ENCODE measurements at regions of chr17 and their contacts with region 1.

Region 1: DNA sequence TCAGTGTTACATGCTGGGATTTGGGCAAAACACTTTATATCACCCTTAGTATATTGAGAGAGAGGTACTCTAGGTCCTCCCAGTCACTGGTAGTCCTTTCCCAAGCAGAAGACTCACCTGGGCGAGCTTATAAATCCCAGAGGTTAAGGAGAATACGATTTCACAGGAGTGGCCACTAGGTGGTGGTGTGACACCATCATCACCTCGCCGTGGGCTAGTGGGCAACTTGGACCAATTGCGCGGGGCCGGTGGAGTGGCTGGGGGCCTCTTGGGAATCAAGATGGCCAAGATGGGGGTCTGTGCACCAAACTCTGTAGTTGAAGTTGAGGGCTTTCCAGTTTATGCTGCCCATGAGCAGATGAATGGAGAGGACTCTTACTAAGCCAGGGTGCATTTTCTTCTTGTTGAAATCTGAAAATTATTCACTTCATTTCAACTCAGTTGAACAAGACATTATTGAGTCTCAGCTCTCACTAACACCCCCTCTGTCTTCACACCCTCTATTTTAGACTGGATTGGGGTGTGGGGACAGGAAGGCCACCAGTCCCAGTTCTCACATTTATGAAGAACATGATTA is 38.2 kb upstream of the PIRT start:
- DNase-seq: peak; percentile 19
- H3K4me3 ChIP-seq: no peak overlapping the region
- H3K27ac ChIP-seq: no peak overlapping the region
- H3K4me1 ChIP-seq: no peaks in the 10 kb centered on the region
- H3K27me3 ChIP-seq: no peaks in the 10 kb centered on the region
- CTCF ChIP-seq: peak; percentile 39 to 72 (median 68)
- POLR2A ChIP-seq: no peak

Region 2: GRCh38 chr17:10772425-10773380 is 103.4 kb before region 1 on chr17:
- intact Hi-C with region 1: no loop called
- DNase-seq: peak; percentile 29
- H3K4me3 ChIP-seq: no peak overlapping the region
- H3K27ac ChIP-seq: no peak overlapping the region
- H3K4me1 ChIP-seq: no peaks in the 10 kb centered on the region
- H3K27me3 ChIP-seq: no peaks in the 10 kb centered on the region
- CTCF ChIP-seq: peak; percentile 27 to 64 (median 57)
- POLR2A ChIP-seq: no peak

Region 3: DNA sequence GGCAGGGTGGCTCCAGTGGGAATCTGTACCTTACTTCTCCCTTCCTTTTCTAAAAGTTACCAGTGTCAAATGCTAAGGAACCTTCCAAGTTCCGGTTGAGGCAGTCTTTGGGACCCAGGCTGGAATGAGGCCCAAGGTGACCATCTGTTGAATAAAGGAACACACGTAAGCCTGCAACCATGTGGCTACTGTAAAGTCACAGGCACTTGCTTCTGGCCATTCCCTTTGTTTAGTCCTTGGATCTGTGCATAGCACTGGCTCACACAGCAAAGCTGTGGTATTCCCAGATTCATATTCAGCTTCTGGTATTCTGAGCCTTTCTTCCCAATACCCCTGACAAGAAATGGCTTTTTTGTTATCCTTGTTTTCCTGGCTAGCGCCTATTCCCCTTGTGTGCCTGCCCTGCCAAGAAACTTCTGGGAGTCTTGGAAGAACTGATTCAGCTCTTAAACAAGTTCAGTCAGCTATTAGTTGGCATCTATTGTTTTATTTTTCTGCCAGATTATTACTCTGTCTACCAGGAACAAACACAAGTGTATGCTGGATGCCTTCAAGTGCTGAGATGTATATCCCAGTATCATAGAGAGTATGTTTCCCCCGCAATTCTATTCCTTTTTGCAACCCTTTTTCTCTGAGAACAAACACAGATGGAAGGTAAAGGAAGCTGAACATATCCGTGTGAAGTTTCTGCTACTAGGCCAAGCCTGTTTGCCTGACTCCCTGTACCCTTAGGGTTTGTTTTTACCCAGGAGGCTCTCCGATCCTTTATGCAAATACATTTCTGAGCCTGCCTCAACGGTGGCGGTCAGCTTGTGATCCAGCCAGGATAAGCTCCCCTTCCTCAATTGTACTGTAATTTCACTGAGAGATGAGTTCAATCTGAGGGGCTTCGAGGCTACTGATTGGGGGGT is 85.3 kb before region 1 on chr17:
- intact Hi-C with region 1: no loop called
- DNase-seq: peak; percentile 42
- H3K4me3 ChIP-seq: no peak overlapping the region
- H3K27ac ChIP-seq: peak overlapping the region; percentile 69 to 76
- H3K4me1 ChIP-seq: peaks cover 4% of the 10 kb centered on the region
- H3K27me3 ChIP-seq: no peaks in the 10 kb centered on the region
- CTCF ChIP-seq: no peak
- POLR2A ChIP-seq: peak; percentile 21

Region 4: DNA sequence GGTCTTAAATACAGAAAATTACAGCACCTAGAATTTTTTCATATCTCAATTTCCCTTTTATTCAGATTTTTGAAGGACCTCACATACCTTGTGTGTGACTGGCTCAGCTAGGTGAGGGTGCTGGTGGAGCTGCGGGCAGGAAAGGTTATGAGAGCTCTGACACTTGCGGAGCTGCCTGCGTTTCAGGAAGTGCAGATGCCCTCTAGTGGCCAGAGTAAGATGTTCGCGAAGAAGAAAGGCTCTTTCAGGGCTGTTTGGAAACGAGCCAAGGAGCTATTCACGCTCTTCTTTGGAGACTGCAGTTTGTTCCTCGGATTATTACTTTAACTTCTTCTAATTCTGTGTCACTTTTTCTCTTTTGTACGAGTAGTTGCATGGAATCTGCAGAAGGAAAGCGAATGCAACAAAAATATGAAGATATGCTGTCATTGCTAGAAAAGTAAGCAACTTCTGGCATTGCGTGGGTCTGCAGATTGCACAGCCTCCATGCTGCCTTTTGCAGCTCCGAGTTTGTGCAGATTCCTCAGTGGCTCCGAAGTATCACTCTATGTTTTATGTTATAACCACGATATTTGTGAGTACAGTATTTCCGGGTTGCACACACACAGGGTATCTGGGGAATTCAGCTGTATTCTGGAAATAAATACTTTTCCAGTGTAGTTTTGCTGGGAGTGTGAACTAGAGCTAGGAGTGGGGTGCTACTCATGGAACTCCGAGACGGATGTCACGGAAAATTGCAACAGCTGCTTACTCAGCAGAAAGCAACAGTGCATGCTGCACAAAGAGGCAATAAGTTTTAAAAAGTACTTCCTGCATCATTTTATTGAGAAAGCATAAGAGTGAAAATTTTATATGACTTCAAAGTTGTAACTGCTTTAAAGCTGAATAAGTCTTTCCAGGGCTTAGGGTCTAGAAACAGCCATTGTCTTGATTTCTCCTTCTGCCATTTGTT is 768.5 kb after region 1 on chr17:
- intact Hi-C with region 1: loop called (anchors 2 kb)
- DNase-seq: peak; percentile 81
- H3K4me3 ChIP-seq: no peak overlapping the region
- H3K27ac ChIP-seq: no peak overlapping the region
- H3K4me1 ChIP-seq: no peaks in the 10 kb centered on the region
- H3K27me3 ChIP-seq: no peaks in the 10 kb centered on the region
- CTCF ChIP-seq: peak; percentile 57 to 79 (median 77)
- POLR2A ChIP-seq: no peak

Region 5: GRCh38 chr17:11986942-11987329 is 1110.9 kb after region 1 on chr17:
- intact Hi-C with region 1: loop called (anchors 2 kb)
- DNase-seq: no peak
- H3K4me3 ChIP-seq: no peak overlapping the region
- H3K27ac ChIP-seq: peak overlapping the region; percentile 40 to 86
- H3K4me1 ChIP-seq: peaks cover 16% of the 10 kb centered on the region
- H3K27me3 ChIP-seq: no peaks in the 10 kb centered on the region
- CTCF ChIP-seq: peak; percentile 16 to 67 (median 60)
- POLR2A ChIP-seq: no peak